Activated CD4-positive, alpha-beta T cell treated with anti-CD3 and anti-CD28 coated beads, Interleukin-2, amount 10 ng/mL, durations not matched to agents 7 days and 5 days (primary cell): ENCODE measurements at regions of chr10 and their contacts with region 1.

Region 1: DNA sequence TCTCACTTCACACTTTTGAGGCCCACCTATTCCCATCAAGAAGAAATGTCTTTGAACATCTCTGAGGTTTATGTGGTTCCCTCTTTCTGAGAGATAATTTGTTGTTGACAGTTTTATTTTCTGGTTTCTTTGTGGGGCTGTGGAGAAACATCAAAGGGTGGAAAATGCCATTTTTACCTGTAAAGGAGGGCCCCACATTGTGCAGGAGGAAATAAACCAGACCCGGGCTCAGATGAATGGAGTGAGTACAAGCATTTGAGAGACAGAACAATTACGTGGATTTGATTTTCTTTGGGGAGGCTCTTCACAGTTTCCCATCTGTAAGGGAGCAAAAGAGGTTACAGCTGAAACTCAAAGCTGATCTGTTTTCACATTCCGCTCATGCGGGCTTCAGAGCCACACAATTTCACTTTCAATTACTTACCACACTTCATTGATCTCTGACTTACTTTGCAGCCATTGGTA is 29.8 kb downstream of the ITPRIP start:
- DNase-seq: peak; percentile 65
- H3K4me3 Mint-ChIP-seq: peak overlapping the region; percentile 53
- H3K27ac Mint-ChIP-seq: peak overlapping the region; percentile 89
- H3K4me1 Mint-ChIP-seq: peaks cover 78% of the 10 kb centered on the region
- H3K27me3 Mint-ChIP-seq: no peaks in the 10 kb centered on the region

Region 2: GRCh38 chr10:104274762-104275721 is 33.4 kb before region 1 on chr10:
- CTCF ChIA-PET with region 1: interaction called, 10 read pairs
- POLR2A ChIA-PET with region 1: no interaction called
- DNase-seq: peak; percentile 44
- H3K4me3 Mint-ChIP-seq: no peak overlapping the region
- H3K27ac Mint-ChIP-seq: no peak overlapping the region
- H3K4me1 Mint-ChIP-seq: peaks cover 3% of the 10 kb centered on the region
- H3K27me3 Mint-ChIP-seq: peaks cover 9% of the 10 kb centered on the region

Region 3: GRCh38 chr10:104322416-104322782 is 13.9 kb after region 1 on chr10:
- CTCF ChIA-PET with region 1: interaction called, 19 read pairs
- POLR2A ChIA-PET with region 1: no interaction called
- DNase-seq: peak; percentile 55
- H3K4me3 Mint-ChIP-seq: peak overlapping the region; percentile 71
- H3K27ac Mint-ChIP-seq: peak overlapping the region; percentile 88
- H3K4me1 Mint-ChIP-seq: peaks cover 95% of the 10 kb centered on the region
- H3K27me3 Mint-ChIP-seq: no peaks in the 10 kb centered on the region

Region 4: GRCh38 chr10:104337974-104338735 is 29.7 kb after region 1 on chr10 and contains the start of gene ITPRIP:
- CTCF ChIA-PET with region 1: interaction called, 11 read pairs
- POLR2A ChIA-PET with region 1: interaction called, 7 read pairs
- DNase-seq: peak; percentile 75
- H3K4me3 Mint-ChIP-seq: peak within 1 kb of the TSS; percentile 98
- H3K27ac Mint-ChIP-seq: peak within 1 kb of the TSS; percentile 100
- H3K4me1 Mint-ChIP-seq: peaks cover 55% of the 10 kb centered on the region
- H3K27me3 Mint-ChIP-seq: peaks cover 5% of the 10 kb centered on the region
- total RNA-seq, gene ITPRIP: 24.9 to 26.5 TPM

Region 5: DNA sequence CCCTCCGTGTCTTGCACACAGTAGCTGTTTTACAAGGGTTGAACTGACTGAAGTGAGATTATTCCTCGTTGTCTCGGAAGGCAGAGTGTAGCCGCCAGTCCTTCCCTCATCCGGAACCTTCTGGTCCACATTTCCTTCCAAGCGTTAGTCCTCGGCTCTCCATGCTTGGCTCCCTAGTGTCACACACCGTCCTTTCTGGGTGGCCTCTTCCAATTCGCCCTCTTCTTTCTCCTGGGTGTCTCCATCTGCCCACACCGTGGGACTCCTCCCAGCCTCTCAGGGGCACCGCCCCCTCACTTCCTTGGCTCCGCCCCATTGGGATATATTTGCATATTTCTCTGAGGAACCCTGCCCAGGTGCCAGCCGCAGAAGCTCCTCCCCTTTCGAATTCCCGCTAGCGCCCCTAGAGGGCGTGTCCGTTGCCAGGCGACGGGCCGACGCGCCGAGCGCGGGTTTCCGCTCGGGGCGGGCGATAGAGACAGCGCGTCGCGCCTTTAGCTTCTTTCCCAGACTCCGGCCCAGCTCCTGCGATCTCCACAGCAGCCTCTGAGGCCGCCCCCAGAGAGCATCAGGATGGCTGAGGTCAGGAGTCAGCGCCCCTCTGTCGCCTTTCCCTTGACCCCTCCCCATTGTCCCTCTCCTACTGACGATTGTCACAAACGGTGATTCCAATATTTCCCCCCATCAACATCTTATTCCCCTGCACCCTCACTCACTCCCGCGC is 45.0 kb after region 1 on chr10 and contains the start of gene CFAP58:
- CTCF ChIA-PET with region 1: interaction called, 47 read pairs
- POLR2A ChIA-PET with region 1: interaction called, 8 read pairs
- DNase-seq: peak; percentile 92
- H3K4me3 Mint-ChIP-seq: peak within 1 kb of the TSS; percentile 34
- H3K27ac Mint-ChIP-seq: peak within 1 kb of the TSS; percentile 51
- H3K4me1 Mint-ChIP-seq: no peaks in the 10 kb centered on the region
- H3K27me3 Mint-ChIP-seq: no peaks in the 10 kb centered on the region
- total RNA-seq, gene CFAP58: 0.22 to 0.27 TPM

Region 6: DNA sequence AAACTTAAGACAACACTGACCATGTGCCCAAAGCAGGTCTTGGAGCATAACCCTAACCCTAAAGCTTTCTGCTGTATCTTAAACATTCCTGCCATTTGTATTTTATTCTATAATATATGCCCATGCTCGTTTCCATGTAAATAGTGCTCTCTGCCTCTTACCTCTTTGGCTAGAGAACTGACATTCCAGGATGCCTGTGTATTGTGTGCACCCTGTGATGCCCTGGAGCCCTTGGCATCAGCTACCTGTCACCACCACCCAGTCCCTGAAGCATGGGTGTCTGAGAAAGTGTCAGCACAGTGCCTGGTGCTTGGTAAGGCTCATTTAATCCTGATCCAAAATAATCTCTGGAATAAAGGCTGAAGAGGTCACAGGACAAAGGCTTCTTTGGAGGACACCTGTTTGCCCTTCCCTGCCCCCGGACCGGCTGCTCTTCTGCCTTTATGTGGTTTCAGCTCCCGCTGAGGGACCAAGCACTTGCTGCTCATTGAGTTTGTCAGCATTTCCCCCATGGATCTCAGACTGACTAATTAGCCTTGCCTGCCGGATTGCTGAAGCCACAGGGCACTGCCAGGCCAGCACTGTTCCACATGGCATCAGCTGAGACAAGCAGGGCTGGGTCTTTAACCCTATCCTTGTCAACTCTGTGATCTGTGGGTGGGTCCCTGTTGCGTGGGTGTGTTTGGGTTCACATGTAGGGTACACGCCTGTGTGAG is 193.6 kb after region 1 on chr10:
- CTCF ChIA-PET with region 1: no interaction called
- POLR2A ChIA-PET with region 1: no interaction called
- DNase-seq: no peak
- H3K4me3 Mint-ChIP-seq: no peak overlapping the region
- H3K27ac Mint-ChIP-seq: no peak overlapping the region
- H3K4me1 Mint-ChIP-seq: no peaks in the 10 kb centered on the region
- H3K27me3 Mint-ChIP-seq: peaks cover 5% of the 10 kb centered on the region